CD8-positive, alpha-beta memory T cell (primary cell): ENCODE measurements at regions of chr11 and their contacts with region 1.

Region 1: GRCh38 chr11:1526785-1527184 is 40.2 kb upstream of the MOB2 start:
- DNase-seq: no peak
- H3K4me3 ChIP-seq: no peak overlapping the region
- H3K4me3 Mint-ChIP-seq: no peak overlapping the region
- H3K27ac ChIP-seq: no peak overlapping the region
- H3K27ac Mint-ChIP-seq: no peak overlapping the region
- H3K4me1 ChIP-seq: peaks cover 15% of the 10 kb centered on the region
- H3K4me1 Mint-ChIP-seq: peaks cover 50 to 72% (median 52%) of the 10 kb centered on the region in 3 donors
- H3K27me3 ChIP-seq: no peaks in the 10 kb centered on the region
- H3K27me3 Mint-ChIP-seq: no peaks in the 10 kb centered on the region

Region 2: DNA sequence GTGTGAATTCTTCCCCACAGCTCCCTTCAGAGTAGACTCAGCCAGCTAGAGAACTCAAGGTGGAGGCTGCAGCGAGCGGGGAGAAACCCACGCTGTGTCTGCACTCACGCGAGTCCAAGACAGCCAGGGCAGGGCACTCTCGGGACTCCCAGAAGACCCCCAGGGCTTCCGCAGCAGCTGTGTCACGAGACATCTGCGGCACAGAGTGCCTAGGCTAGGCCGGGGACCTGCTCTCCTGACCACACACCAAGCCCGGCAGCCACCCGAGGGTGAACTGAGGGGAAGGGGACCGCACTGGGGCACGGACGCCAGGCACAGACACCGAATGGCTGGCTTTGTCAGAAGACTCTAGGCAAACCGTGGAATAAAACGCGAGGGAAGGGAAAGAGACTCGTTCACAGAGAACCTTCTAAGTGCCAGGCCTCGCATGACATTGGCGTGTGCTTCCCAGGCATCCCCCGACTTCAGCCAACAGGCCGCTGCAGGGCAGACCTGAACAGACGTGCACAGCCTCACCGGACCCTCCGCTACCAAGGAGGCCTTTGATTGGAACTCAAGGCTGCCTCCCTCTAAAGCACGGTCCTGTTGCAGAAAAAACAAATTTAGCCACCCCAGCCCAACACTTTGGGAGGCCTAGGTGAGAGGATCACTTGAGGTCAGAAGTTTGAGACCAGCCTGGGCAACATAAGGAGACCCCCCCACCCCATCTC is 22.0 kb before region 1 on chr11:
- CTCF ChIA-PET with region 1: no interaction called
- POLR2A ChIA-PET with region 1: no interaction called
- DNase-seq: peak in 1 of 5 donors; percentile 46
- H3K4me3 ChIP-seq: no peak overlapping the region
- H3K4me3 Mint-ChIP-seq: no peak overlapping the region
- H3K27ac ChIP-seq: no peak overlapping the region
- H3K27ac Mint-ChIP-seq: peak overlapping the region in 1 of 8 donors; percentile 17
- H3K4me1 ChIP-seq: no peaks in the 10 kb centered on the region
- H3K4me1 Mint-ChIP-seq: peaks cover 30 to 87% (median 30%) of the 10 kb centered on the region in 3 donors
- H3K27me3 ChIP-seq: no peaks in the 10 kb centered on the region
- H3K27me3 Mint-ChIP-seq: no peaks in the 10 kb centered on the region

Region 3: DNA sequence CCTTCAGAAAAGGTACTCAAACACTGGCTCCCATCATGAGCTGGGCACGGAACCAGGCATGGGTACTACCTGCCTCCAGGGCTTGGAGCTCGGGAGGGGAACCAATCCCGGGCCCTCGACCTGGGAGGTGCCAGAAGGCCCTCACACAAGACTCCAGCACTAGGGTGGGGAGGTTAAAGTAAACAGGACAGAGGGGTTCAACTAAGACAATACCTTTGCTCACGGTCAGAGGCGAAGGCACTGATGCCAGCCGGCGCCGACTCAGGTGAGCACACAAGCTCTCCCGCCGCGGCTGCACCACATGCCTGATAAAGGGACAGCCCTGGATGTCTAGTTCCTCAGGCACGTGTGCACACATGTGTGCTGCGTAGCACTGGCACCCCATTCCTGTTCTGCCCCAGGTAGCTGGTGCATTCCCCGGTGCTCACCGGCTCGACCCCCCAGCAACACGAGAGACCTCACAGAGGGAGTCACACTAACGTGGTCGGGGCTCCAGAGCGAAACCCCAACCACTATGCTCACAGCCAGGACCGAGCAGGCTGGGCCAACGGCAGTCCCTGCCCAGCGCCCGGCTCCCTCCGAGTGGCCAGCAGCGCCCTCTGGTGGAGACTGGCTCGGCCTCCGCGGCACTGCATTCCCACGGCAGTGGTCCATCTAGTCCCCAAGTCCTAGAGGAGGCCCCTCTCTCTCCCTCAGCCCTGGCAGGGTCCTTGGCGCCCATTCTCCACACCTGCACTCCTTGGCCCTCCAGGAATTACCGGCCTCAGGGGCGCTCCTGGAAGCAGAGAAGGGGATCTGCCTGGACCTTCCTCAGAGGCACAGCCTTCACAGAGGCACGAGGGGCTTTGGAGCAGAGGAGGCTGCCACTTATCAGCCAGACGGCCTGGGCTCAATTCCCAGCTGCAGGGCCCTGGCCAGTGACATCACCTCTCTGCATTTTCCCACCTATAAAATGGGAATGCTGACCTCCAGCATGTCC is 11.4 kb before region 1 on chr11:
- CTCF ChIA-PET with region 1: interaction called, 10 read pairs
- POLR2A ChIA-PET with region 1: no interaction called
- DNase-seq: peak; percentile 53 to 75 (median 66)
- H3K4me3 ChIP-seq: no peak overlapping the region
- H3K4me3 Mint-ChIP-seq: peak overlapping the region in 2 of 7 donors; percentile 11 to 19
- H3K27ac ChIP-seq: no peak overlapping the region
- H3K27ac Mint-ChIP-seq: peak overlapping the region in 2 of 8 donors; percentile 22 to 71
- H3K4me1 ChIP-seq: peaks cover 31% of the 10 kb centered on the region
- H3K4me1 Mint-ChIP-seq: peaks cover 64 to 93% (median 74%) of the 10 kb centered on the region in 3 donors
- H3K27me3 ChIP-seq: no peaks in the 10 kb centered on the region
- H3K27me3 Mint-ChIP-seq: no peaks in the 10 kb centered on the region

Region 4: DNA sequence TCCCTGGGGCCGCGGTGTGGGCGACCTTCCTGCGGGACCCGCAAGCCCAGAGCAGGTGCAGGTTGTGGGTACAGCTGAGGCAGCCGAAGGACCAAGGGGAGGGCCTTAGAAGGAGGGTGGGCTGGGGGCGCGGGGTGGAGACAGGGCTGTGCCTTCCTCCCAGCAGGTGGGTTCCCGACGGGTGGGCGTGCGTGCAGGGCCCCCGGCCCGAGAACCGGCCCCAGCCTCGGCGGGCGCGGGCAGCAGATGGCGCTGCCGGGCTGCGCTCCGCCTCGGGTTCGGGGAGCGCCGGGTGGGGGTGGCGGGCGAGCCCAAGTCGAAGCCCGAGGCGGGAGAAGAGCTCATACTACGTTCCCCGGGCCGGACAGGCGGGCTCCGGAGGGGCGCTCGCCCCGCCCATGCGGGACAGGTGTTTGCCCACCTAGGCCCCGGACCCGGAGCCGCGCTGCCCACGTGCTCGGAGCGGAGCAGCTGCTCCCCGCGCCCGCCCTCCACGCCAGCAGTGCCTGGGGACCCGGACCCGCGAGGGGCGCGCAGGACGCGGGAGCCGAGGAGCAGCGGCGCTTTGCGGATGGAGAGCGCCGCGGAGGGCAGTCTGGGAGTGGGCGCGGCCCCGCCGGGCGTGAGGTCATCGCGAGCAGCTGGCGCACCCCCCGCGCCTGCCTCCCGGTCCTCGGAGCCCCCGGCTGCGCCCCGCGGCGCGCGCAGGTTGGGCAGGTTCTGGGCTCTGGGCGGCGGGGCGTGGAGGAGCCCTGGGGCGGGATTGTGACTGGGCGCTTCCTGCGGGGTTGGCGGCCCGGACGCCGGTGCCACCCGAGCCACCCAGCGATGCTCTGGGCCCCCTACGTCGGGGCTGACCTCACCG is 20.0 kb after region 1 on chr11:
- CTCF ChIA-PET with region 1: no interaction called
- POLR2A ChIA-PET with region 1: no interaction called
- DNase-seq: peak; percentile 31 to 70 (median 47)
- H3K4me3 ChIP-seq: no peak overlapping the region
- H3K4me3 Mint-ChIP-seq: no peak overlapping the region
- H3K27ac ChIP-seq: no peak overlapping the region
- H3K27ac Mint-ChIP-seq: no peak overlapping the region
- H3K4me1 ChIP-seq: peaks cover 14% of the 10 kb centered on the region
- H3K4me1 Mint-ChIP-seq: peaks cover 0 to 11% (median 2%) of the 10 kb centered on the region in 3 donors
- H3K27me3 ChIP-seq: peaks cover 24% of the 10 kb centered on the region
- H3K27me3 Mint-ChIP-seq: peaks cover 19 to 37% of the 10 kb centered on the region in 2 donors